ENCODE measurements at regions of chrX and their contacts with region 1.

Region 1: DNA sequence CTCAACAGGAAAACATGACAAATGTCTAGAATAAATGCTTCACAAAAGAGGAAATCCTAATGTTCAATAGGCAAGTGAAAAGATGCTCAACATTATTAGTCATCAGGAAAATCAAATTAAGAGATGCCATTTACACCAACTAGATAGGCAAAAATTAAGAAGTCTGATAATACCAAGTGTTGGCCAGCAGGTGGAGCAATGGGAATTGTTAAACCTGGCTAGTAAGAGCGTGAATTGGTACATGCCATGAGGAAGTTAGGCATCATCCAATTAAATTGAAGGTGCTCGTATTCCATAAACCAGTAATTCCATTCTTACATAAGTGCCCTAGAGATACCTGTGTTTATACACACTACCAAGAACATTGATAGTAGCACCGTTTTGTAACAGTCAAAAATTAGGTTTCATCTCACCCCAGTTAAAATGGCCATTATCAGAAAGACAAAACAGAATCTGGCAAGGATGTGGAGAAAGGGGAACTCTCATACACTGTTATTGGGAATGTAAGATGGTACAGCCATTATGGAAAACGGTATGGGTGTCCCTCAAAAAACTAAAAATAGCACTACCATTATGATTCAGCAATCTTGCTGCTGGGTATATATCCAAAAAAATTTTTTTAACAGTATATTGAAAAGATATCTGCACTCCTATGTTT is 14.0 kb upstream of the ZCCHC18 start:
- DNase-seq: peak; percentile 20
- CTCF ChIP-seq: peak; percentile 52

Region 2: GRCh38 chrX:104113222-104113965 is 15.1 kb after region 1 on chrX:
- CTCF ChIA-PET with region 1: interaction called, 14 read pairs
- POLR2A ChIA-PET with region 1: no interaction called
- DNase-seq: peak; percentile 34
- CTCF ChIP-seq: peak; percentile 51

Region 3: GRCh38 chrX:104136241-104137019 is 38.1 kb after region 1 on chrX:
- CTCF ChIA-PET with region 1: interaction called, 28 read pairs
- POLR2A ChIA-PET with region 1: no interaction called
- DNase-seq: peak; percentile 52
- CTCF ChIP-seq: peak; percentile 61

Measured in GM10248 (cell line).